ENCODE measurements at regions of chr13 and their contacts with region 1.

Region 1: GRCh38 chr13:96967248-96967745 is 27.0 kb downstream of the OXGR1 start:
- DNase-seq: no peak
- ATAC-seq: peak; percentile 63
- H3K4me3 ChIP-seq: peak overlapping the region in 1 of 2 experiments; percentile 44; a peak in 2 of 4 replicates
- H3K27ac ChIP-seq: no peak overlapping the region
- H3K4me1 ChIP-seq: no peaks in the 10 kb centered on the region
- H3K27me3 ChIP-seq: no peaks in the 10 kb centered on the region
- CTCF ChIP-seq: peak; percentile 54

Region 2: DNA sequence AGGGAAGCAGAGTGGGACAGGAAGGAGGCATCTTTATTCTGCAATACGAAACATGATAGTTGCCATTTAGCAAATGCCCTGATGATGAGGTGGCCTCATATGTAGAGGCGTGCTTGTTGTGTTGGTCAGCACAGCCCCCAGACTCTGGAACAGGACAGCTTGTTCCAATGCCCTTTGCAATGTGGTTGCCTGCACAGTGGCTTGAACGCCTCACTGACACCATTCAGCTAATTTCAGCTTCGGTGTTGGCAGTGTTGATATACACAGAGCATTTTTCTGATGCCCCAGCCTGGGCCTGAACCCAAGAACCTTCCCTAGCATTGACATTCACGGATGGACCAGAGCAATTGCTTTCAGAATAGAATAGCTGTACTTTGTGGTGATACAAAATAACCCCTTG is 744.1 kb before region 1 on chr13:
- CTCF ChIA-PET with region 1: interaction called, 12 read pairs
- POLR2A ChIA-PET with region 1: no interaction called
- in situ Hi-C with region 1: no loop called
- intact Hi-C with region 1: no loop called
- DNase-seq: no peak
- ATAC-seq: no peak
- H3K4me3 ChIP-seq: no peak overlapping the region
- H3K27ac ChIP-seq: no peak overlapping the region
- H3K4me1 ChIP-seq: no peaks in the 10 kb centered on the region
- H3K27me3 ChIP-seq: no peaks in the 10 kb centered on the region
- CTCF ChIP-seq: no peak

Region 3: GRCh38 chr13:96934889-96935489 is 32.3 kb before region 1 on chr13:
- CTCF ChIA-PET with region 1: interaction called, 4 read pairs
- POLR2A ChIA-PET with region 1: interaction called, 13 read pairs
- in situ Hi-C with region 1: no loop called
- intact Hi-C with region 1: no loop called
- DNase-seq: no peak
- ATAC-seq: no peak
- H3K4me3 ChIP-seq: no peak overlapping the region
- H3K27ac ChIP-seq: no peak overlapping the region
- H3K4me1 ChIP-seq: no peaks in the 10 kb centered on the region
- H3K27me3 ChIP-seq: no peaks in the 10 kb centered on the region
- CTCF ChIP-seq: no peak

Measured in Panc1 (cell line).